Activated CD4-positive, alpha-beta memory T cell treated with anti-CD3 and anti-CD28 coated beads for 36 hours (primary cell): ENCODE measurements at regions of chr17 and their contacts with region 1.

Region 1: DNA sequence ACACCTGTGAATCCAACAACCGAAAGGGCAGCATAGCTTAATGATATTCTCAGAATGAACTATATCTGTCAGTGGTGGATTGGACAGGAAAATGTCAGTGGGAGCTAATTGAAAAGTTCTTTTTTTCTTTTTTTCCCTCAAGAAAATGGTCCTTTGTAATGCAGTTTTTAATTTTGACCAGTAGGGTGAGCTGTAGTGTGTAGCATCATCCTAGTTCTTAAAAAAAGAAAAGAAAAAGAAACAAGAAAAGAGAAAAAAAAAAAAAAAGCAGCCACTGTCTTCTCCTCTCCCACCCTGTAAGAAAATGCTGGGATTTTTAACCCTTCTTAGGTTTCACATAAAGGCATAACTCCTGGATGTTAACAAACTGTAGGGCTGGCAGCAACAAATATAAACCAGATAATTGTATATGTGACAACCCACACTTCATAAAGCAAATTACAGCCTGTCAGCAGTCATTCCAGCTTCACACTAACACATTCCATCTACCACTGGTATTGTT is 78.1 kb downstream of the SKAP1 start:
- DNase-seq: no peak
- H3K4me3 Mint-ChIP-seq: no peak overlapping the region
- H3K27ac Mint-ChIP-seq: no peak overlapping the region
- H3K4me1 Mint-ChIP-seq: peaks cover 6% of the 10 kb centered on the region
- H3K27me3 Mint-ChIP-seq: no peaks in the 10 kb centered on the region

Region 2: GRCh38 chr17:48363161-48363560 is 11.3 kb after region 1 on chr17:
- CTCF ChIA-PET with region 1: interaction called, 16 read pairs
- POLR2A ChIA-PET with region 1: no interaction called
- intact Hi-C with region 1: no loop called
- DNase-seq: no peak
- H3K4me3 Mint-ChIP-seq: no peak overlapping the region
- H3K27ac Mint-ChIP-seq: no peak overlapping the region
- H3K4me1 Mint-ChIP-seq: peaks cover 4% of the 10 kb centered on the region
- H3K27me3 Mint-ChIP-seq: no peaks in the 10 kb centered on the region

Region 3: DNA sequence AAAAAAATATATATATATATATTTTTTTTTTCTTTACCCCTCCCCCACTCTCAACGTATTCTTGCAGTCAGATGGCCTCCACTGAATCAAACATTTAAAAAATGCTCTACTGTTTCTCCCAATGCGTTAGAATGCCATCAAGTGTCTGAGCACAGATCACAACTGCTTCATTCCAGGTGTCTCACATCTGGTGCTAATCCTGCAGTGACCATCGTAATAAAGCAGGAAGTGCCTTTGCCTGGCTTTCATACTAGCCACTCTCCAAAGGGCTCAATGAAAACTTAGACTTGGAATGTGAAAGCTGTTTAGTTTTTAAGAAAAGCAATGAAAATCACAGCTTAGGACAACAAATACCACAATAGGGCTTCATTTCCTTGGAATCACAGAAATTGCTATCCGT is 41.0 kb after region 1 on chr17:
- CTCF ChIA-PET with region 1: interaction called, 10 read pairs
- POLR2A ChIA-PET with region 1: interaction called, 3 read pairs
- intact Hi-C with region 1: no loop called
- DNase-seq: no peak
- H3K4me3 Mint-ChIP-seq: no peak overlapping the region
- H3K27ac Mint-ChIP-seq: no peak overlapping the region
- H3K4me1 Mint-ChIP-seq: peaks cover 45% of the 10 kb centered on the region
- H3K27me3 Mint-ChIP-seq: no peaks in the 10 kb centered on the region

Region 4: GRCh38 chr17:48586355-48587258 is 234.7 kb after region 1 on chr17:
- CTCF ChIA-PET with region 1: interaction called, 49 read pairs
- POLR2A ChIA-PET with region 1: no interaction called
- intact Hi-C with region 1: no loop called
- DNase-seq: peak; percentile 55
- H3K4me3 Mint-ChIP-seq: peak overlapping the region; percentile 88
- H3K27ac Mint-ChIP-seq: no peak overlapping the region
- H3K4me1 Mint-ChIP-seq: peaks cover 21% of the 10 kb centered on the region
- H3K27me3 Mint-ChIP-seq: peaks cover 74% of the 10 kb centered on the region

Region 5: DNA sequence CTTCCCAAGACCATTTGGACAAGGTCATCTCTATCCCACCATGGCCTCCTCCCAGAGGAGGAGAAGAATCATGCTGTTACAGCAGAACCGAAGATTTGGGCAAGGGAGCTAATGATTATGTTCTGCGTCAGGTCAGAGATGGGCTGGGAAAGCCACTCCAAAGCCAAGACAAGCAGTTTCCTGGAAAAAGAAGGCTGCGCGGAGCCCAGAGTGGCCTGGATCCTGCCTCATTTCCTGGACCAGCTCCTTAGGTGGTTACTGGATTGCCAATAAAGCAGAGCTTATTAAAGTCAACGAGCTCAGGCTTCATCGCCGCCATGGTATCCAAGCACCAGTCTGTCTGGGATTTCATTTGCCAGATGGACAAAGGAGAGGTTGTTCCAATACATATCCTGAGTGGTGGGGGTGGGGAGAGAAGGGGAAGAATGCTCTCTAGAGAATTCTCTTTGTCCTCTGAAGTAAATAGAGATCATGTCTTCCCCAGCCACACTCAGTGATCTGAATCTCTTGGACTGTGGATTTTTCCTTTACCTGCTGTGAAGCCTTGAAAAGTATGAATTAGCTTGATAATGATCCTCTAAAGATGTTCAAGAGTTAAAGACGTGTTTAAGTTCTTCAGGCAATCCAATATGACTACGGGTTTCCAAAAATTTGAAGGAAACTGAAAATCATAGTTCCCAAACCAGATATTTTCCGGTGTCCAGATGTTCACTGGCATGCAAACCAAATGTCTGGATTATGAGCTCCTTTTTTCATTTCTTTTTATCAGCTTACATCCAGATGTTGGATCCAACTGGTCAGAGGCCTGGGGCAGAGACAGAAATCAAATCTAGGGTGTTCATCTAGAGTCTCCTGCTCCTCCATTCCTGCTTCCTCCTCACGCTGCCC is 352.7 kb after region 1 on chr17:
- CTCF ChIA-PET with region 1: no interaction called
- POLR2A ChIA-PET with region 1: no interaction called
- intact Hi-C with region 1: no loop called
- DNase-seq: no peak
- H3K4me3 Mint-ChIP-seq: no peak overlapping the region
- H3K27ac Mint-ChIP-seq: no peak overlapping the region
- H3K4me1 Mint-ChIP-seq: no peaks in the 10 kb centered on the region
- H3K27me3 Mint-ChIP-seq: peaks cover 48% of the 10 kb centered on the region